Transverse colon (tissue), 4 donors: ENCODE measurements at regions of chr6 and their contacts with region 1.

Region 1: DNA sequence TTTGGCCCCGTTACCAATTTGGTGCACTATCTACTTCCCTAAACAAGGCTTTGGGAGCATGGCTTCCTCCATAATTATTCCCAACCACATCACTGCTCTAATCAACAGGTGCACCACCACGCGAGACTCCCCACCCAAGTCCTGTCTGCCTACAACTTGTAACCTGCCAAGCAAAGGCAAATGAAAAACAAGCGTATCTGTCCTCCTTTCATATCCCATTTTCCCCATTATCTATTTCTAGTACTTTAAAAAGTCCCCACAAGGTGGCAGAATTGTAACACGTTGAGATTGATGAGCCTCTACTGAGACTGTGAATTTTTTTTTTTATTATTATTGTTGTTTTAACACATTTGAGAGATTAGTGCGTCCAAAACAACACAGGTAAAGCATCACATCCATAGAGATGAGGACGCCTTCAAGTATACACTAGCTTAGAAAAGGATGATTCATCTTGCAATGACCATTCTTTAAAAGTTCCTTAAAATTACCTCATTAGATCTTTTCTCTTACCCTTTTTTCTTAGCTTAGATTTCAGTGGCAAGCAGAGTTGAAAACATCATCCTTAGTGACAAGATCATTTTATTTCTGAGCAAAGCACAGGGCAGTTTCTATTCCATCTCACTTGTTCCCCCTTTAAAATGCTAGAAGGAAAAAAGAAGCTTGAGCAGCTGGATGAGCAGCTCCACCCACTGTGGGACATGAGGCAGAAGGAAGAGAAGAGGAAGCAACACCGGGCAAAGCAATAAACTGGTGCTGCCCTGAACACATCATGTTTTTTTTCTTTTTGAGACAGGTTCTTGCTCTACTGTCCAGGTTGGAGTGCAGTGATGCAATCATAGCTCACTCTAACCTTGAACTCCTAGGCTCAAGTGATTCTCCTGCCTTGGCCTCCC is 210.8 kb downstream of the ARHGAP18 start:
- DNase-seq: no peak
- H3K4me3 ChIP-seq: no peak overlapping the region
- H3K27ac ChIP-seq: no peak overlapping the region
- H3K4me1 ChIP-seq: peaks cover 0 to 9% (median 1%) of the 10 kb centered on the region in 4 donors
- H3K27me3 ChIP-seq: no peaks in the 10 kb centered on the region
- CTCF ChIP-seq: peak; percentile 52 to 67 (median 63)
- EP300 ChIP-seq: no peak
- POLR2A ChIP-seq: no peak

Region 2: DNA sequence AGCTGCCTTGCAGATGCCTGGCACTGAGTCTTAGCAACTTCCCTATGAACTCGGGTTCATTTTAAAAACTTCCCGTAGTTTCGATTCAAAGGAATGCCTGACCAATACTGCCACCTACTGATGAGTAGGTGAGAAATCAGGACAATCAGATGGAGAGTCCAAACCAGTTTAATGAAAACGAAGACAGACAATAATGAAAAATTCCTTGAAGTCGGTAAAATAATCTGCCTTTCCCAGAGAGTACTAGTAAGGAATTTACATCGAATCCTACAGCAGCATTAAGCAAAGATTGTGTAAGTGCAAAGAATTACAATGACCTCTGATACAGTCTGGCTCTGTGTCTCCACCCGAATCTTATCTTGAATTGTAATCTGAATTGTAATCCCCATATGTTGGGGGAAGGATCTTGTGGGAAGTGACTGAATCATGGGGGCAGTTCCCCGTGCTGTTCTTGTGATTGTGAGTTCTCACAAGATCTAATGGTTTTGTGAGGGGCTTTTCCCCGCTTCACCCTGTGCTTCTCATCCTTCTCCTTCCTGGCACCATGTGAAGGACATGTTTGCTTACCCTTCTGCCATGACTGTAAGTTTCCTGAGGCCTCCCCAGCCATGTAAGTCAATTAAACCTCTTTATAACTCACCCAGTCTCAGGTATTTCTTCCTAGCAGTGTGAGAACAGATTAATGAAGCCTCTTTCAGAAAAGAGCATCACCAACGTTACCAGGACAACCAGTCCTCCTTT is 76.4 kb after region 1 on chr6:
- in situ Hi-C with region 1: no loop called
- intact Hi-C with region 1: loop called (anchors 10 kb)
- DNase-seq: no peak
- H3K4me3 ChIP-seq: peak overlapping the region in 2 of 4 donors; percentile 13 to 26
- H3K27ac ChIP-seq: no peak overlapping the region
- H3K4me1 ChIP-seq: peaks cover 0 to 7% (median 0%) of the 10 kb centered on the region in 4 donors
- H3K27me3 ChIP-seq: no peaks in the 10 kb centered on the region
- CTCF ChIP-seq: peak; percentile 57 to 60 (median 58)
- EP300 ChIP-seq: no peak
- POLR2A ChIP-seq: no peak